ENCODE measurements at regions of chr16 and their contacts with region 1.

Region 1: GRCh38 chr16:24504472-24505345 is 34.7 kb upstream of the RBBP6 start:
- DNase-seq: peak; percentile 30
- ATAC-seq: peak; percentile 86
- H3K4me3 Mint-ChIP-seq: no peak overlapping the region
- H3K27ac Mint-ChIP-seq: no peak overlapping the region
- H3K4me1 Mint-ChIP-seq: peaks cover 2% of the 10 kb centered on the region
- H3K27me3 Mint-ChIP-seq: peaks cover 25% of the 10 kb centered on the region
- CTCF ChIP-seq: no peak

Region 2: GRCh38 chr16:23784811-23785447 is 719.8 kb before region 1 on chr16:
- CTCF ChIA-PET with region 1: no interaction called
- POLR2A ChIA-PET with region 1: no interaction called
- intact Hi-C with region 1: loop called (anchors 5 kb)
- DNase-seq: no peak
- ATAC-seq: no peak
- H3K4me3 Mint-ChIP-seq: no peak overlapping the region
- H3K27ac Mint-ChIP-seq: no peak overlapping the region
- H3K4me1 Mint-ChIP-seq: peaks cover 6% of the 10 kb centered on the region
- H3K27me3 Mint-ChIP-seq: peaks cover 11% of the 10 kb centered on the region
- CTCF ChIP-seq: no peak

Region 3: GRCh38 chr16:24041826-24042631 is 462.7 kb before region 1 on chr16:
- CTCF ChIA-PET with region 1: interaction called, 18 read pairs
- POLR2A ChIA-PET with region 1: interaction called, 4 read pairs
- intact Hi-C with region 1: loop called (anchors 1 kb)
- DNase-seq: peak; percentile 64
- ATAC-seq: peak; percentile 93
- H3K4me3 Mint-ChIP-seq: no peak overlapping the region
- H3K27ac Mint-ChIP-seq: peak overlapping the region; percentile 8
- H3K4me1 Mint-ChIP-seq: peaks cover 8% of the 10 kb centered on the region
- H3K27me3 Mint-ChIP-seq: no peaks in the 10 kb centered on the region
- CTCF ChIP-seq: peak; percentile 57

Region 4: GRCh38 chr16:24253192-24253591 is 251.5 kb before region 1 on chr16:
- CTCF ChIA-PET with region 1: interaction called, 11 read pairs
- POLR2A ChIA-PET with region 1: no interaction called
- intact Hi-C with region 1: loop called (anchors 1 kb)
- DNase-seq: no peak
- ATAC-seq: peak; percentile 66
- H3K4me3 Mint-ChIP-seq: no peak overlapping the region
- H3K27ac Mint-ChIP-seq: no peak overlapping the region
- H3K4me1 Mint-ChIP-seq: peaks cover 7% of the 10 kb centered on the region
- H3K27me3 Mint-ChIP-seq: peaks cover 54% of the 10 kb centered on the region
- CTCF ChIP-seq: no peak

Region 5: DNA sequence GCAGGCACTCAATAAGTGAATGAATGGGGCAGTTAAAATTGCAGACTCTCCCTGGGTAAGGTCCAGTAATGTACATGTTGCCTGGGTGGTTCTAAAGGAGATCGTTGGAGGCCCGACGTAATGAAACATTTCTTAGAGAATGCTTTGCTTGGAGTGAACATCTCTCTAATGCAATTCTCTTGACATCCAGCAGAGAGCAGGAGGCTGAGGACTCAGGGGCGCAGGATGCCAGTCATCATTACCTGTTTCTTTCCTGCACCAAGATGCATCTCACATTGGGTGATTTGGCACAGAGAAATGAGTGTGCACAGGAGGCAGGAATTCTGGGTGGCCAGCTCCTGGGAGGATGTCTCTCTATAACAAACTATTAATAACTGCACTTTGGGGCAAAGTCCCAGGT is 95.7 kb before region 1 on chr16:
- CTCF ChIA-PET with region 1: no interaction called
- POLR2A ChIA-PET with region 1: no interaction called
- intact Hi-C with region 1: loop called (anchors 1 kb)
- DNase-seq: no peak
- ATAC-seq: no peak
- H3K4me3 Mint-ChIP-seq: no peak overlapping the region
- H3K27ac Mint-ChIP-seq: no peak overlapping the region
- H3K4me1 Mint-ChIP-seq: no peaks in the 10 kb centered on the region
- H3K27me3 Mint-ChIP-seq: peaks cover 9% of the 10 kb centered on the region
- CTCF ChIP-seq: no peak

Region 6: GRCh38 chr16:24463196-24463945 is 41.3 kb before region 1 on chr16:
- CTCF ChIA-PET with region 1: no interaction called
- POLR2A ChIA-PET with region 1: no interaction called
- intact Hi-C with region 1: loop called (anchors 2 kb)
- DNase-seq: no peak
- ATAC-seq: no peak
- H3K4me3 Mint-ChIP-seq: no peak overlapping the region
- H3K27ac Mint-ChIP-seq: no peak overlapping the region
- H3K4me1 Mint-ChIP-seq: no peaks in the 10 kb centered on the region
- H3K27me3 Mint-ChIP-seq: peaks cover 10% of the 10 kb centered on the region
- CTCF ChIP-seq: no peak

Region 7: GRCh38 chr16:24478401-24478800 is 26.3 kb before region 1 on chr16:
- CTCF ChIA-PET with region 1: no interaction called
- POLR2A ChIA-PET with region 1: no interaction called
- intact Hi-C with region 1: no loop called
- DNase-seq: no peak
- ATAC-seq: no peak
- H3K4me3 Mint-ChIP-seq: no peak overlapping the region
- H3K27ac Mint-ChIP-seq: no peak overlapping the region
- H3K4me1 Mint-ChIP-seq: peaks cover 7% of the 10 kb centered on the region
- H3K27me3 Mint-ChIP-seq: peaks cover 17% of the 10 kb centered on the region
- CTCF ChIP-seq: no peak

Region 8: DNA sequence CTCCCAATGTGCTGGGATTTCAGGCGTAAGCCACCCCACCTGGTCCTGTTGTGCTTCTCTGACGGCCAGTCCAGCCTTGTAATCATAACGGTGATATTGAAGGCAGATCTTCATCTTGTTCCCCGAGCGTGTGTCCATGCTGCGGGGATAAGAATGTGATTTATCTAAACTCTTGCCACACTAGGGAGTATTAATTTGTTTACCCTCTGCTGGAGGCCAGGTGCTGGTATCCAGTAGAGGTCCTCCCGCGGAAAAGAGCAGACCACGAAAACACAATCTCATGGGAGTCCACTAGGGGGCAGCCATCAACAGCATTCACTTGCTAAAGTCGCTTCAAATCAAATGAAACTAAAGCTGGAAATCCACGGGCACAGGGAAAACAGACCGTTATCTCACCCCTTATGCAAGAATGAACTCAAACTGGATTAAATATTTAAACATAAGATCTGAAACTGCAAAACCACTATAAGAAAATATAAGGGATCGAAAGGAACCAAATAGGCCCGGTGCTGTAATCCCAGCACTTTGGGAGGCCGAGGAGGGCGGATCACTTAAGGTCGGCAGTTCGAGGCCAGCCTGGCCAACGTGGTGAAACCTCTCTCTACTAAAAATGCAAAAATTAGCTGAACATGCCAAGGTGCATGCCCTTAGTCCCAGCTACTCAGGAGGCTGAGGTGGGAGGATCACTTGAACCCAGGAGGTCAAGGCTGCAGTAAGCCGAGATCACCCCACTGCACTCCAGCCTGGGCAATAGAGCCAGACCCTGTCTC is 12.4 kb after region 1 on chr16:
- CTCF ChIA-PET with region 1: interaction called, 10 read pairs
- POLR2A ChIA-PET with region 1: no interaction called
- intact Hi-C with region 1: no loop called
- DNase-seq: peak; percentile 39
- ATAC-seq: peak; percentile 60
- H3K4me3 Mint-ChIP-seq: peak overlapping the region; percentile 24
- H3K27ac Mint-ChIP-seq: no peak overlapping the region
- H3K4me1 Mint-ChIP-seq: peaks cover 6% of the 10 kb centered on the region
- H3K27me3 Mint-ChIP-seq: peaks cover 3% of the 10 kb centered on the region
- CTCF ChIP-seq: peak; percentile 82

Region 9: DNA sequence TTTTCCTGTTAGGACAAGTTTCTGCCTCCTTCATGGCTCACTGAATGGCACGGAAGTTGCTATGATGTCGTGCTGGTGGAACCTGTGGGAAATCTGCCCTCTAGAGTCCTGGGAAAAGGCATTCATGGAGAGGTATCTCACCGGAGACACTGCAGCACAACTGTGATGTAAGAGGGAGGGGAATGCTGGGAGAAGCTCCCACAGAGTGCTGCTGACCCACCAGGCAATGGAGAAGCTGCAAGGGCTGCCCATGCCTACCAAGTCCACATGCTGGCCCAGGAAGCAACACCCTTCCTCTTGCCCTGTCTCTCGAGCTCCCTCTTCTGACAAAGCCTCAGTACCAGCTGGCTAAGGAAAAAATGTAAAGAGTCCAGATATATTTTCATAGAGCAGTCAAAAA is 295.9 kb after region 1 on chr16:
- CTCF ChIA-PET with region 1: no interaction called
- POLR2A ChIA-PET with region 1: no interaction called
- intact Hi-C with region 1: no loop called
- DNase-seq: no peak
- ATAC-seq: no peak
- H3K4me3 Mint-ChIP-seq: no peak overlapping the region
- H3K27ac Mint-ChIP-seq: no peak overlapping the region
- H3K4me1 Mint-ChIP-seq: no peaks in the 10 kb centered on the region
- H3K27me3 Mint-ChIP-seq: no peaks in the 10 kb centered on the region
- CTCF ChIP-seq: no peak